A673 (cell line): ENCODE measurements at regions of chr2 and their contacts with region 1.

Region 1: GRCh38 chr2:26942543-26943295 is 27.7 kb upstream of the MAPRE3 start:
- DNase-seq: peak; percentile 73
- H3K4me3 ChIP-seq: no peak overlapping the region
- H3K27ac ChIP-seq: no peak overlapping the region
- H3K4me1 ChIP-seq: no peaks in the 10 kb centered on the region
- H3K27me3 ChIP-seq: no peaks in the 10 kb centered on the region
- CTCF ChIP-seq: peak; percentile 89

Region 2: GRCh38 chr2:26846328-26847306 is 96.1 kb before region 1 on chr2:
- CTCF ChIA-PET with region 1: interaction called, 38 read pairs
- POLR2A ChIA-PET with region 1: interaction called, 3 read pairs
- intact Hi-C with region 1: loop called (anchors 1 kb)
- DNase-seq: peak; percentile 92
- H3K4me3 ChIP-seq: peak overlapping the region; percentile 97
- H3K27ac ChIP-seq: no peak overlapping the region
- H3K4me1 ChIP-seq: peaks cover 25% of the 10 kb centered on the region
- H3K27me3 ChIP-seq: peaks cover 7% of the 10 kb centered on the region
- CTCF ChIP-seq: peak; percentile 91

Region 3: GRCh38 chr2:27133905-27134780 is 191.4 kb after region 1 on chr2 and contains the start of gene PREB:
- CTCF ChIA-PET with region 1: no interaction called
- POLR2A ChIA-PET with region 1: no interaction called
- intact Hi-C with region 1: no loop called
- DNase-seq: peak; percentile 98
- H3K4me3 ChIP-seq: peak within 1 kb of the TSS; percentile 81
- H3K27ac ChIP-seq: peak within 1 kb of the TSS; percentile 81
- H3K4me1 ChIP-seq: peaks cover 7% of the 10 kb centered on the region
- H3K27me3 ChIP-seq: no peaks in the 10 kb centered on the region
- CTCF ChIP-seq: peak; percentile 30; the same call in 1 of the 2 replicates
- total RNA-seq, gene PREB: 52.7 and 53.8 TPM in 2 replicates

Region 4: DNA sequence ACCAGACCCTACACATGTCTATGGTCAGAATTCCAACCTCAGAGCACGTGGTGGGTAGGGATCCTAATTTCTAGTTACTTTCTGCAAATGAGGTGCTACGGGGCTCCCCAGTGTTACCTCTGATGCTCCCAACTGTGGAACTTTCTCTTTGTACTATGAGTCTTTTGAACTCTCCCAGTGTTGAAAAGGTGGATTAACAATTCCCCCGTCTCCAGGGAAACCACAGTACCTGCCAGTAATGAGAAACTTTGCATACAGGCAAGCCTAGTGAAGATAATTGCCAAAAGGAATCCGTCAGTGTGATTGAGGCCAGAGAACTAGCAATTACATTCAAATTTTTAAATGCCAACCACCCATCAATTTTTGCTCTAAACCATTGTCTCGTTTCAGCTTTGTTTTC is 1321.0 kb after region 1 on chr2:
- CTCF ChIA-PET with region 1: no interaction called
- POLR2A ChIA-PET with region 1: no interaction called
- intact Hi-C with region 1: no loop called
- DNase-seq: no peak
- H3K4me3 ChIP-seq: no peak overlapping the region
- H3K27ac ChIP-seq: no peak overlapping the region
- H3K4me1 ChIP-seq: peaks cover 3% of the 10 kb centered on the region
- H3K27me3 ChIP-seq: no peaks in the 10 kb centered on the region
- CTCF ChIP-seq: no peak